ENCODE measurements at regions of chr11 and their contacts with region 1.

Region 1: GRCh38 chr11:15650105-15650938 is 535.6 kb downstream of the INSC start:
- DNase-seq: peak; percentile 91 to 97 (median 93)
- H3K4me3 ChIP-seq: peak overlapping the region; percentile 25
- H3K27ac ChIP-seq: peak overlapping the region in 1 of 2 donors; percentile 30
- H3K4me1 ChIP-seq: peaks cover 6% of the 10 kb centered on the region
- H3K27me3 ChIP-seq: no peaks in the 10 kb centered on the region
- CTCF ChIP-seq: peak; percentile 95 to 98 (median 96)
- EP300 ChIP-seq: no peak
- POLR2A ChIP-seq: peak; percentile 8

Region 2: DNA sequence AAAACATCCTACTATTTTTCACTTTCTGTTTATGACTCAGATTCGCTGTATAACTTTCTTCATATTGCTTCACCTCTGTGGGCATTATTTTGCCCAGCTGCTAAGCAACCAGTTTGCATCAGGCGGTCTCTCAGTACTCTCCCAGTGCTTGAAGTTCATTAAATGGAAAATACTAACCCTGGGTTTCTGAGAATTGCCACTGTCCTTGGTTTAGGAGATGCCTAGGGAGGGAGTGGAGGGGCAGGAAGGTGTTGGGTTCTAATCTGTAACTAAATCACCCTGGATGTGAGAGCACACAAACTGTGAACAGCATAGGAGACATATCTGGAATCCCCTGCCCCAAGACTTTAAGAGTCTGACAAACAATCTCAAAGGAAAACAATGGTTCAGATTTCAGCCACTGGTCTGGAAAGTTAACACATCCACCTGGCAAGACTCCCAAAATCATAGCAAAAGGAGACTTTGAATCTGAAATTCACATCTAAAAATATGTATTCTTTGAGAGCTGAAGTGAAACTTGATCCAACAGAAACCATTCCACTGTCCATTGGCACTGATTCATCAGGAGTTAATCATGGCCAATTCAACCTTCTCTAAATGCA is 166.0 kb after region 1 on chr11:
- intact Hi-C with region 1: no loop called
- DNase-seq: peak in 1 of 5 donors; percentile 27
- H3K4me3 ChIP-seq: no peak overlapping the region
- H3K27ac ChIP-seq: no peak overlapping the region
- H3K4me1 ChIP-seq: peaks cover 2% of the 10 kb centered on the region
- H3K27me3 ChIP-seq: no peaks in the 10 kb centered on the region
- CTCF ChIP-seq: no peak
- EP300 ChIP-seq: no peak
- POLR2A ChIP-seq: no peak

Region 3: GRCh38 chr11:15969281-15969680 is 319.0 kb after region 1 on chr11:
- intact Hi-C with region 1: loop called in 1 of 4 experiments (anchors 10 kb)
- DNase-seq: peak; percentile 37 to 68 (median 57)
- H3K4me3 ChIP-seq: no peak overlapping the region
- H3K27ac ChIP-seq: peak overlapping the region in 1 of 2 donors; percentile 60
- H3K4me1 ChIP-seq: peaks cover 2% of the 10 kb centered on the region
- H3K27me3 ChIP-seq: no peaks in the 10 kb centered on the region
- CTCF ChIP-seq: no peak
- EP300 ChIP-seq: no peak
- POLR2A ChIP-seq: no peak

Region 4: DNA sequence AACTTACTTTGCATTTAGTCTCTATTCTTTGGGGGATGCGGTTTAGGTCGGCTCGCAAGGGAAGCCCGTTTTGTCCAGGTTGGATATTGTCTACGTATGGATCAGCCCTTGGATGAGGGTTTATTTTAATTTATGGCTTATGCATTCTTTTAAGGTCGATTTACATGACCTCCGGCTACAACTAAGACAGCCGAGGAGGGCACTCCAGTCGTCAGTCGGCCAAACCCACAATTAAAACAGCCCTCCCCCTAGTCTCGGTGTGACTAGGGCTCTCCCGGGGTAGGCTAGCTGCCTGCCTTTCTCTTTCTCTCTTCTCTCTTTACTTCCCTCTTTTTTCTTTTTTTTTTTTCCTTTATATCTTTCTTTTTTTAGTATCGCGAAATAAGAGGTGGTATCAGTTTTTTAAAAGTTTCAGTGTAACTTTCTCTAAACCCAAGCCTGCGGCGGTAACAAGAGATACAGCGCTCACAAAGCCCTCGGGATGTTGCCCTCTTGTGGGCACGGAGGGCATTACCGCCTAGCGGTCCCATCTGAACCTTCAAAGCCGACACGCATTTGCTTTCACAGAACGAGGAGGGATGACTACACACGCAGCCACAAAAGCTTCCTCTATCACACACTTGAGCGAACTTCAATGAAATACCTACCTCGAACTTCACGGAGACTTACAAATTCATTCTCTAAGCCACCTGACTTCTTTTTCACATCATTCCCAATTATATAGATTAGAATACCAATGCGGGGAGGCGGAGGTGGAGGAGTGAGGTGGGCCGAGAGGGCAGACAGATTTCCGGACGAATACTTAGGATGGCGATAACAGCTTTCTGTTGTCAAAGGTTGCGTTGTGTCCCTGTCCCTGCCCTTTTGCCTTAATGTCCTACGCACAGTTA is 955.8 kb after region 1 on chr11:
- intact Hi-C with region 1: loop called (anchors 2 to 10 kb)
- DNase-seq: peak; percentile 76 to 92 (median 91)
- H3K4me3 ChIP-seq: peak overlapping the region; percentile 41
- H3K27ac ChIP-seq: peak overlapping the region; percentile 10 to 23
- H3K4me1 ChIP-seq: peaks cover 3% of the 10 kb centered on the region
- H3K27me3 ChIP-seq: no peaks in the 10 kb centered on the region
- CTCF ChIP-seq: peak; percentile 67 to 81 (median 70)
- EP300 ChIP-seq: no peak
- POLR2A ChIP-seq: no peak